GM12878 (cell line): ENCODE measurements at regions of chr18 and their contacts with region 1.

Region 1: DNA sequence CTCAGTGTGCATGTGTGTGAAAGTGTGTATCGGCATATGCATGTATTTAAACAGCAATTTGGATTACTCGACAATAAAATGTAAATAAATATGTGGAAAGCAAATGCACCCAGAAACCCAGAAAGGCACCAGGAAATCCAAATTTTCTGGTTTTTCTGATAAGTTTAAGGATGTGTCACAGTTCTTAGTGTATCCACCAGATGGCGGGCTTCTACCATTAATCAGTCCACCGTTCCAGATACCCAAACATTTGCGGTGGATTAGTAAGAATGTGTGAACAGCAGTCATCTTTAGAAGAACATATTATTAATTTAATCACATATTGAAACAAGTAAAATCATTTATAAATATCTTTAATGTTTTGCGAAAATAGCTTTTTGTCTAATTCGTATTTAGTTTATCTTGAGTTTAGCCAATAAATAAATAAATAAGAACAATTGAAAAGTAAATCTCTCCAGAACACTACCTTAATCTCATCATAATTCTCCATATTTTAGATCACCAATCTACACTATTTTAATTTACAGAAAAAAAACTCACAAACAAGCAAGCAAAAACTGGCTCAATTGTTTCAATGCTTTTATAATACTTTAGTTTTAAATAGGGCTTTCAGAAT is 298.9 kb downstream of the DSEL start:
- DNase-seq: no peak
- ATAC-seq: peak; percentile 86
- H3K4me3 ChIP-seq: no peak overlapping the region
- H3K27ac ChIP-seq: no peak overlapping the region
- H3K4me1 ChIP-seq: no peaks in the 10 kb centered on the region
- H3K27me3 ChIP-seq: no peaks in the 10 kb centered on the region
- CTCF ChIP-seq: peak; percentile 61 to 74 (median 63); a peak in 5 of 6 replicates
- EP300 ChIP-seq: no peak
- POLR2A ChIP-seq: no peak
- RAD21 ChIP-seq: peak; percentile 94

Region 2: DNA sequence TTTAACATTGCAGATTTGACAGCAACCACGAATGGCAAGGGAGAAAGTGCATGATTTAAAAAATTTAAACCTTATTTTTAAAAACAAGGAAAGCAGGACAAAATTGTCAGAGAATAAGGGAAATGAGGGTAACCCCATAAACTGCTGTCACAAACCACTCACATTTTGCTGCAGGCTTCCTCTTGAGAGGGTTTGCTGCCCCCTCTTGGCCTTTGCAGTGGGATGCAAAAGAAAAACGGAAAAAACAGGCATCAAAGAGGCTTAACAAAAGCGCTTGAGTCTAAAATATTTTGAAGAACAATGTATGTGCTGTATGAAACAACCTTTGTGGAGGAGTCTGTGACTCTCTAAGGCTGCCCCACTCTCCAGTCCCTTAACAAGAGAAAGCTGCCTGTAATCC is 1405.7 kb after region 1 on chr18:
- CTCF ChIA-PET with region 1: interaction called, 3 read pairs
- POLR2A ChIA-PET with region 1: no interaction called
- RAD21 ChIA-PET with region 1: no interaction called
- SMC1A ChIA-PET with region 1: no interaction called
- in situ Hi-C with region 1: loop called (anchors 10 kb)
- intact Hi-C with region 1: loop called (anchors 10 kb)
- DNase-seq: no peak
- ATAC-seq: peak; percentile 78
- H3K4me3 ChIP-seq: no peak overlapping the region
- H3K27ac ChIP-seq: no peak overlapping the region
- H3K4me1 ChIP-seq: no peaks in the 10 kb centered on the region
- H3K27me3 ChIP-seq: no peaks in the 10 kb centered on the region
- CTCF ChIP-seq: peak; percentile 59 to 62 (median 61)
- EP300 ChIP-seq: no peak
- POLR2A ChIP-seq: no peak
- RAD21 ChIP-seq: peak; percentile 82

Region 3: DNA sequence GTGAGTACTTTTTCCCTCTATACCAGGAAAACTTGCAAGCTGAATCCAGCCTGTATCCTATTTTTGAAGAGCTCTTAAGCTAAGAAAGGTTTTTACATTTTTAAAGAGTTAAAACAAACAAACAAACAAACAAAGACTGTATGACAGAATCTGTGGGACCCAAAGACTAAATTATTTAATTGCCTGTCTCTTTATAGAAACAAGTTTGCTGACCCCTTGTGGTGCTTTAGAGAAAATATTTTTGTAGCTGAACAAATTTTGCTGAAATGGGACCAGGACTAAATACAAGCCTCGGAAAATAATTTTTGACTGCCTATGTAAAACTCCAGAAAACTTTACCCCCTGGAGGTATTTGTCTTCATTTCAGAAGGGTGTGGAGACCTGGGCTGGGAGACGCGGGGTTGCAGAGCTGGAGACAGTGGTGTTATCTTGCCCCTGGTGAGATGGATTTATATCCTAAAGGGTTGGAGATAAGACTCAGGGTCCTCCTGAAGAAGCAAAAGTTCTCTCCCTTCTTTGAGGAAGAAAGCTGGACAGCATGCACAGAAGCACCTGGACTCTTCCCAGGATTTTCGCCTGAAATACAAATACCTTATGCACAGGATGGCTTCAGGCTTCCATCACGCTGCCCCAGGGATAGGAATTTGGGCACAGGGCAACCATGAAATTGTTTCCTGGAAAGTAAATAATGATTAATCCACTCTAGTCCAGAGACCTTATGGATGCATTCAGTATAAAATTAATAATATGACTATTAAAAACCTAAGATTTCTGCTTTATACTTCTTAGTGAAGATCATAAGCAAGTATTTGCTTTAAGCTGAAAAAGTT is 1442.9 kb after region 1 on chr18:
- CTCF ChIA-PET with region 1: interaction called, 18 read pairs
- POLR2A ChIA-PET with region 1: no interaction called
- RAD21 ChIA-PET with region 1: interaction called, 7 read pairs
- SMC1A ChIA-PET with region 1: interaction called, 3 read pairs
- in situ Hi-C with region 1: loop called (anchors 10 kb)
- intact Hi-C with region 1: loop called (anchors 1 kb)
- DNase-seq: no peak
- ATAC-seq: peak; percentile 56
- H3K4me3 ChIP-seq: no peak overlapping the region
- H3K27ac ChIP-seq: no peak overlapping the region
- H3K4me1 ChIP-seq: no peaks in the 10 kb centered on the region
- H3K27me3 ChIP-seq: no peaks in the 10 kb centered on the region; a peak in 1 of 4 replicates
- CTCF ChIP-seq: peak; percentile 42 to 52 (median 45); a peak in 5 of 6 replicates
- EP300 ChIP-seq: no peak
- POLR2A ChIP-seq: no peak
- RAD21 ChIP-seq: peak; percentile 61

Region 4: DNA sequence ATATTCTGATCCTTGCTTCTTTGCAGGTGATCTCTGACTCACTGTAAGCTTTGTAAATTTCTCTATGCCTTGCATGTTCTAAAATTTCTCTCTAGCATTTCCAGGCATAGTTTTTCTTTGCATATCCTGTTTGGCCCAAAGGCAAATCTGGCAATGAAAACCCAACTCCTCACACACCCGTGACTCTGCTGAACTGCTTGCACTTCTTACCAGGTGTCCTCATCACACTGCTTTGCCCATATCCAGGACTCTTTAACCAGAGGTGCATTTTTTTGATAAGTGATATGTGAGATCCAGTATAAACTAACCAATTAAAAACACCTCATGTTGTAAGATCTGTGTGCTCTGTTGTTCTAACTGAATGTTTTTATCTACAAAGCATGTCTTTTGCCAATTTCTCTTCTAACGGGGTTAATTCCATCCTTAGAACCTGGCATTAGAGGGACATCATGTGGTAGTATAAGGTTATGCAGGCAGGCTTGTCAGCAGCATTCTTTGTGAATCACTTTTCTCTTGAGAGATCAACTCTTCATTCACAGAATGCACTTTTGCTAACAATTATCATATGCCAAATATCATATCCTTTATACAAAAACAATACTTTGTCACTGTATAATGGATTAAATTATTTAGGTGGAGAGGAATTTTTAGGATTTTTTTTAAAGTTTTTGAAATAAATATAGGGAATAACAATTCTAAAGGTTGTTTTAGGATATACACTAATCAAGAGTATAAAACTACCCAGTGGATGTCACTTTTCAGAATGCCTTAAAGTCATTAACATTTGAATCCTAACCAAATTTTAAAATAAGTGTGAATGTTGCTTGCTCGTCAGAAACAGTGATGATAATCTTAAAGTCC is 1518.1 kb after region 1 on chr18:
- CTCF ChIA-PET with region 1: no interaction called
- POLR2A ChIA-PET with region 1: no interaction called
- RAD21 ChIA-PET with region 1: no interaction called
- SMC1A ChIA-PET with region 1: no interaction called
- in situ Hi-C with region 1: loop called (anchors 25 kb)
- intact Hi-C with region 1: loop called (anchors 1 kb)
- DNase-seq: no peak
- ATAC-seq: peak; percentile 84
- H3K4me3 ChIP-seq: no peak overlapping the region
- H3K27ac ChIP-seq: no peak overlapping the region
- H3K4me1 ChIP-seq: no peaks in the 10 kb centered on the region
- H3K27me3 ChIP-seq: no peaks in the 10 kb centered on the region
- CTCF ChIP-seq: peak; percentile 75 to 81 (median 79)
- EP300 ChIP-seq: no peak
- POLR2A ChIP-seq: no peak
- RAD21 ChIP-seq: peak; percentile 97